CD8-positive, alpha-beta memory T cell (primary cell): ENCODE measurements at regions of chr17 and their contacts with region 1.

Region 1: DNA sequence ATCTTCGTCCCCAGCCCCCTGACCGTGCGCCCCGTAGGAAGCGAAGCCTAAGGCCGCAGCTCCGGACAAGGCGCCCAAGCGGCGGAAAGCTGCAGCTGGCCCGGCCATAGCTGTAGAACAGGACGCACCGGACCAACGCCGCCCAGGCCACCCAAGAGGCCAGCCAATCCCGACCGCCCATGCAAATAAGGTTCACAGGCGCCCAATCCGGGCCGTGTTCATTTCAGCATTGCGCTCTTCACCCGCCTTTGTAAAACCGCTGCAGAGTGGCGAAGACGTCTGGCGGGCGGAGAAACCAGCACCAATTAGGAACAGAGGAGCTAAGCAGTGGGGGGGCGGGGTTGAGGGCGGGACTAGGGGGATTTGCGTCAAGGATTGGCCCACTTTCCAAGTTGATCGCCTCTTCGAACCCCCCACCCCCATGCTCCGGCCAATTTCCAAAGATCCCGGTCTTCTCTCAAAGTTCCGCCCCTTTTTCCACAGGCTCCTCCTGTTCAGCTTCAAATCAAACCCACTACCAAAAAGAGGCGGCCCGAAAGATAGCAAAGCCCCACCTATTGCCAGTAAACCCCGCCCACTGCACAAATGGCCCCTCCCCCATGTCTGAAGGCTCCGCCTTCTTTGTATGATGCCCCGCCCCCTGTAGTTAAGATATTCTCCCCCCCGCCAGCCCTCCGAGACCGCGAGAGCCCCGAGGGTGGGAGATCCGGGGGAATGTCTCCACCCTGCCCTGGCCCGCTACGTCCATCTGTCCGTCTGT is at the start of gene TMEM256:
- DNase-seq: peak; percentile 91 to 97 (median 95)
- H3K4me3 ChIP-seq: peak within 1 kb of the TSS; percentile 90
- H3K4me3 Mint-ChIP-seq: peak within 1 kb of the TSS; percentile 90 to 99 (median 97)
- H3K27ac ChIP-seq: peak within 1 kb of the TSS; percentile 67
- H3K27ac Mint-ChIP-seq: peak within 1 kb of the TSS; percentile 83 to 99 (median 96)
- H3K4me1 ChIP-seq: peaks cover 16% of the 10 kb centered on the region
- H3K4me1 Mint-ChIP-seq: peaks cover 17 to 36% (median 21%) of the 10 kb centered on the region in 3 donors
- H3K27me3 ChIP-seq: no peaks in the 10 kb centered on the region
- H3K27me3 Mint-ChIP-seq: peaks cover 0 to 2% of the 10 kb centered on the region in 2 donors
- total RNA-seq, gene TMEM256: 45.4 to 51.4 TPM

Region 2: GRCh38 chr17:7329997-7330633 is 74.0 kb before region 1 on chr17:
- CTCF ChIA-PET with region 1: no interaction called
- POLR2A ChIA-PET with region 1: no interaction called
- DNase-seq: peak; percentile 70 to 87 (median 81)
- H3K4me3 ChIP-seq: peak overlapping the region; percentile 79
- H3K4me3 Mint-ChIP-seq: peak overlapping the region; percentile 91 to 99 (median 97)
- H3K27ac ChIP-seq: peak overlapping the region; percentile 82
- H3K27ac Mint-ChIP-seq: peak overlapping the region; percentile 95 to 99 (median 97)
- H3K4me1 ChIP-seq: peaks cover 47% of the 10 kb centered on the region
- H3K4me1 Mint-ChIP-seq: peaks cover 36 to 60% (median 46%) of the 10 kb centered on the region in 3 donors
- H3K27me3 ChIP-seq: no peaks in the 10 kb centered on the region
- H3K27me3 Mint-ChIP-seq: peaks cover 0 to 2% of the 10 kb centered on the region in 2 donors

Region 3: GRCh38 chr17:7383742-7384488 is 20.2 kb before region 1 on chr17:
- CTCF ChIA-PET with region 1: interaction called, 3 read pairs
- POLR2A ChIA-PET with region 1: interaction called, 16 read pairs
- DNase-seq: peak; percentile 72 to 88 (median 80)
- H3K4me3 ChIP-seq: peak overlapping the region; percentile 83
- H3K4me3 Mint-ChIP-seq: peak overlapping the region; percentile 78 to 92 (median 87)
- H3K27ac ChIP-seq: peak overlapping the region; percentile 79
- H3K27ac Mint-ChIP-seq: peak overlapping the region; percentile 85 to 97 (median 92)
- H3K4me1 ChIP-seq: peaks cover 13% of the 10 kb centered on the region
- H3K4me1 Mint-ChIP-seq: peaks cover 12 to 16% (median 15%) of the 10 kb centered on the region in 3 donors
- H3K27me3 ChIP-seq: peaks cover 16% of the 10 kb centered on the region
- H3K27me3 Mint-ChIP-seq: peaks cover 18 to 33% of the 10 kb centered on the region in 2 donors